ENCODE measurements at regions of chr19 and their contacts with region 1.

Region 1: DNA sequence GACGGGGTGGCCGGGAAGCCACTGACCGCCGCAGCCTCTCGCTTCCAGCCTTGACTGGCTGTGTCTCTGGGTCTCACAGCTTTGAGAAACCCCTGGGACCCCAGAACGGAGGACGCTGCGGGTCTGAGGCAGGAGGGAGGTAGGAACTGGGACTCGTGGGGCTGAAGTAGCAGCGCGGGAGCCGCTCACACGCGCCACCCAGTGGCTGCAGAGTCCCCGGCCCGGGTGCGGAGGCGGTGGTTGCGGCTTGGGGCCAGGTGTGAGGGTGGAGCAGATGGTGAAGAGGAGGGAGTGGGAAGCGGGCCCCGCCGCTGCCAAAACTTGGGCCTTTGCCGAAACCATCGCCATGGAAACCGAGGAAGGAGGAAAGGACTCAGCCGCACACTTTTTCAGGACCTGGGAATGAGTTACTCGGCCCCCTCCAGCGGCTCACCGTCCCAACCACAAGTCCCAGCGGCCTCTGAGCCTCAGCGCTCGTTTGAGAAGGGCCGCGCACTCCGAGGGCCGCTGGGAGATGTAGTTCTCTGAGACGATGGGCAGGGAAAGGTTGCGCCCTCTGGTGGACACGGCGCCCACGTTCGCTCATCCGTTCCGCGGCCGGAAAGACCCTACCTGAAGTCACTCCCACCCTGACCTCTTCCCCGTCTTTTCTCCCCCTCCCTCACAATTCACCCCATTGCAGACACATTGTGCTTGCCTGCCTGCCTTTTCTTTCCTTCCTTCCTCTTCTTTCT is 2.2 kb upstream of the SLC17A7 start:
- DNase-seq: peak; percentile 97
- H3K4me3 ChIP-seq: peak overlapping the region; percentile 71
- H3K27ac ChIP-seq: peak overlapping the region; percentile 61
- H3K4me1 ChIP-seq: peaks cover 6% of the 10 kb centered on the region
- CTCF ChIP-seq: peak; percentile 89

Region 2: DNA sequence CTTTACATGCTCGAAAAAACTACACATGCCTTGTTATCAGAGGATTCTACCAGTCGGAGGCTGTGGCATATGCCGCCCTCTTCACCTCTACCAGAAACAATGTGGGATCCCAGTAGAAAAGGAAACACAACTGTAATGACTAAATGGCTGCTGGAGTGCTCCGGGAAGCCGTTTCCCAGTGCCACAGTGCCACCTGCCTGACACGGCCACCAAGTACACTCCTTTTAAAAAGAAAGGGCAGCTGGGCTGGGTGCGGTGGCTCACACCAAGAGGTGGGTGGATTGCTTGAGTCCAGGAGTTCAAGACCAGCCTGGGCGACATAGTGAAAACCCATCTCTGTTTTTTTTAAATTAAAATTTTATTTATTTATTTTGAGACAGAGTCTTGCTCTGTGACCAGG is 218.7 kb before region 1 on chr19:
- CTCF ChIA-PET with region 1: no interaction called
- POLR2A ChIA-PET with region 1: no interaction called
- intact Hi-C with region 1: loop called (anchors 2 kb)
- DNase-seq: peak; percentile 72
- H3K4me3 ChIP-seq: no peak overlapping the region
- H3K27ac ChIP-seq: no peak overlapping the region
- H3K4me1 ChIP-seq: peaks cover 11% of the 10 kb centered on the region
- CTCF ChIP-seq: peak; percentile 82

Region 3: DNA sequence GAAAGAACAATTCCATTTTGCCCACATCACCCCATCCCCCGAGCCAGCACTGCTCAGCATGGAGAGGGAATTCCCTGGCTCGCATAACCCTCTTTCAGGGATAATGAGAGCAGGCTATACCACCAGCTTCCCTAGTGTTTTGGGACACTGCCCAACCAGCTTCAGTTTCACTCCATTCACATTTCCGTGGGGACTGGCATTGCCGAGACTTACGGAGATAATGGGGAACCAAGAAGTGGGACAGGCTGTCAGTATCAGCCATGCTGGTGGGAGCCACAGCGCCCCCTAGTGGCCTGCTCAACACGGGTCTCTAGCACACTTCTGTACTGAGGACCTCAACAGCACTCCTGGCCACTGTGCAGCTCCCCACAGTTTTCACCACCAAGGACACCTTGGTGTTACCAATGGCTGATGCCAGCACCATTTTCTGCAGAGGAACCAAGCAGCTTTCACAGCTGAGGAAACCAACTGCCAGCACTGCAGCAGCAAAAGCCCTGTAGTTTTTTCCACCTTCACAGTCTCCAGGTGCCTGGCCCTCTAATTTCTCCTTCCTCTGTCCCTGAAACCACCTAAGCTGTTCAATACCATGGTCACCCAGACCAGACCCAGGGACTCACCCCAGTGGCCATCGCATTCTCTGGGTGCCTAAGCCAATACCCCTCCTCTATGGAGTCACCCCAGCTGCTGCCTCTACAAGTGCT is 142.2 kb before region 1 on chr19:
- CTCF ChIA-PET with region 1: no interaction called
- POLR2A ChIA-PET with region 1: no interaction called
- intact Hi-C with region 1: loop called (anchors 1 kb)
- DNase-seq: peak; percentile 85
- H3K4me3 ChIP-seq: peak overlapping the region; percentile 5
- H3K27ac ChIP-seq: no peak overlapping the region
- H3K4me1 ChIP-seq: peaks cover 10% of the 10 kb centered on the region
- CTCF ChIP-seq: peak; percentile 98

Region 4: GRCh38 chr19:49331616-49332055 is 111.9 kb before region 1 on chr19:
- CTCF ChIA-PET with region 1: interaction called, 3 read pairs
- POLR2A ChIA-PET with region 1: no interaction called
- intact Hi-C with region 1: loop called (anchors 10 kb)
- DNase-seq: peak; percentile 91
- H3K4me3 ChIP-seq: peak overlapping the region; percentile 60
- H3K27ac ChIP-seq: peak overlapping the region; percentile 98
- H3K4me1 ChIP-seq: peaks cover 83% of the 10 kb centered on the region
- CTCF ChIP-seq: 0 out of 2 replicates have a peak, but pooled peaks have one; percentile 6

Region 5: DNA sequence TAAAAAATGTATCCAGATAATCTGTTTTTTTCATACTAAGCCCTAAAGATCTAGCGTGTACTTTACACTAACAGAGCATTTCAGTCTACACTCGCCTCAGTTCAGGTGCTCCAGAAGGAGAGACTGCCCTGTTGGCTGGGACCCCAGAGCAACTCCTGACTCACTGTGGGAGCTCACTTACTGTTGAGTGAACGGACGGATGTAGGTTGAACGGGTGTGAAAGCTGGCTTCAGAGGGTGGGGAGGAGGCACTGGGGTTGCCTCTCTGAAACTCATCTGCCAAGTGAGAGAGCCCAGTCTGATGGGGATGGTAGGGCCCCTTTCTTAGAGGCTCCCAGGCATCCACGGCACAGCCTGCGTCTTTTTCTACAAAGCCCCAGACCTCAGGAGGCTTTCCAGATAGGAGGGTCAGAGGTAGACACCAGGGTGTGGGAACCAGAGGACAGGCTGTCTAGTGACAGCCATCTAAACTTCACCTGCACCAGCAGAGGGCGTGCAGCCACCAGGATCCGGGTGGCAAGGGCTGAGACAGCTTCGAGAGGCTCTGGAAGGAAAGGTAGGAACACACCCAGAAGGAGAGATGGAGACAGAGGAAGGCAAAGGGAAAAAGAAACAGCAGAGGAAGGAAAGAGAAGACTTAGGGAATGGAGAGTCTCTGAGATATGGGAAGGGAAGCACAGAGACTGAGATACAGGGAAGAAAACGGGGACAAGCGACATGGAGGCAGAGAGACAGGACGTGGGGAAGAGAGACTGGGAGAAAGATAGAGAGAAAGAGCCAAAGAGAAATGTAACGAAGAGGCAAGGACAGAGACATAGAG is 51.7 kb before region 1 on chr19:
- CTCF ChIA-PET with region 1: interaction called, 4 read pairs
- POLR2A ChIA-PET with region 1: no interaction called
- intact Hi-C with region 1: loop called (anchors 1 kb)
- DNase-seq: peak; percentile 90
- H3K4me3 ChIP-seq: peak overlapping the region; percentile 11
- H3K27ac ChIP-seq: peak overlapping the region; percentile 92
- H3K4me1 ChIP-seq: peaks cover 86% of the 10 kb centered on the region
- CTCF ChIP-seq: peak; percentile 99